ENCODE measurements at regions of chr5 and their contacts with region 1.

Region 1: DNA sequence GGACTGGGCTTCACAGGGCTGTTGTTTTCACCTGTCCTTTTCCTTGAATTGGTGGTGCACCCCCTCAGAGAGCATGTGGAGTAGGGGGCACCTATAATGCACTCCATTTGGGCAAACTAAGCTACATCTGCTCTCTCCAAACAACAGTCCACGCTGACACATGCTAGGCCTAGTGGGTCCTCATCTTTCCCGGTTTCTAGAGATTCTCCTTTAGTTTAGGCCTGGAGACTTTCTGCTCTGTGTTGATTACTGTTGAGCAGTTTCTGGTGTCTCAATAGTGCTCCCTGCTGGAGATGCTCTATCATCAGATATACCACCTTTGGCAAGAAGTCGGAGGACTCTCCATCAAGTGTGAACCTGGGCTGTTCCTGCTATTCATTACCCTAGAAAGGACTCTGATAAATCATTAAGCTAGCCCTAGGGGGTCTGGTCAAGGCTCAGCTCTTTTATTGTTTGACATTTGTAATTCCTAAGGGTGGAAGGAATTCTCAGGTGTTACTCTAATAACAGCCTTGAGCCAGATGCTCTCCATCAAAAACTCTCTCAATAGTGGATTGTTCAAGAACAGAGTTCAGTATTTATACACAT is 64.0 kb upstream of the FYB1 start:
- DNase-seq: no peak
- ATAC-seq: peak; percentile 73

Region 2: DNA sequence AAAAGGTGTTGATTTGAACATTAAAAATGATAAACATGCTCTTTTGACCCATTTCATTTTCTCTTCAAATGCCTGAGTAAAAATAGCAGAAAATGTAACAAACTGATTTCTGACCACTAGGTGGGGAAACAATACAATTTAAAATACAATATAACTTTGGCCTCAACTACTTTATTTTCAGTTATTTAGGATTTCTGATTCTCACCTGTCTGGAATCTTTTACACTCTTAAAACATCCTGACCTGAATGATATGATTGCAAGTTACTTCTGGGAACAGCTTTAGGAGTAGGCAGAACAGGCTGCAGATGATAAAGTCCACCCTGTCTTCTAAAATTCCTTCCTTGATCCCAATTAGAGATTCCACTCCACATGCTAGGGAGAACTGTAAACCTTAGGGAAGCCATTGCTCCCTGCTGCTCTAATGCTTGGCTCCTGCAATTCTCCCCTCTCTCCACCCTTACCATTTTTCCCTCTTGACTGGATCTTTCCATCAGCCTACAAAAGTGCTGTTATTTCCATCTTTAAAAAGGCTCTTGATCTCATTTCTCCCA is 134.3 kb before region 1 on chr5:
- intact Hi-C with region 1: loop called (anchors 10 kb)
- DNase-seq: no peak
- ATAC-seq: no peak

Region 3: GRCh38 chr5:39217365-39218281 is 65.7 kb before region 1 on chr5:
- intact Hi-C with region 1: loop called (anchors 2 kb)
- DNase-seq: peak; percentile 82
- ATAC-seq: peak; percentile 74